ENCODE measurements at regions of chr11 and their contacts with region 1.

Region 1: GRCh38 chr11:10514210-10514609 is 26.8 kb downstream of the RNF141 start:
- DNase-seq: no peak
- ATAC-seq: no peak
- H3K4me3 Mint-ChIP-seq: no peak overlapping the region
- H3K27ac Mint-ChIP-seq: no peak overlapping the region
- H3K4me1 Mint-ChIP-seq: peaks cover 16% of the 10 kb centered on the region
- H3K27me3 Mint-ChIP-seq: no peaks in the 10 kb centered on the region
- CTCF ChIP-seq: no peak

Region 2: DNA sequence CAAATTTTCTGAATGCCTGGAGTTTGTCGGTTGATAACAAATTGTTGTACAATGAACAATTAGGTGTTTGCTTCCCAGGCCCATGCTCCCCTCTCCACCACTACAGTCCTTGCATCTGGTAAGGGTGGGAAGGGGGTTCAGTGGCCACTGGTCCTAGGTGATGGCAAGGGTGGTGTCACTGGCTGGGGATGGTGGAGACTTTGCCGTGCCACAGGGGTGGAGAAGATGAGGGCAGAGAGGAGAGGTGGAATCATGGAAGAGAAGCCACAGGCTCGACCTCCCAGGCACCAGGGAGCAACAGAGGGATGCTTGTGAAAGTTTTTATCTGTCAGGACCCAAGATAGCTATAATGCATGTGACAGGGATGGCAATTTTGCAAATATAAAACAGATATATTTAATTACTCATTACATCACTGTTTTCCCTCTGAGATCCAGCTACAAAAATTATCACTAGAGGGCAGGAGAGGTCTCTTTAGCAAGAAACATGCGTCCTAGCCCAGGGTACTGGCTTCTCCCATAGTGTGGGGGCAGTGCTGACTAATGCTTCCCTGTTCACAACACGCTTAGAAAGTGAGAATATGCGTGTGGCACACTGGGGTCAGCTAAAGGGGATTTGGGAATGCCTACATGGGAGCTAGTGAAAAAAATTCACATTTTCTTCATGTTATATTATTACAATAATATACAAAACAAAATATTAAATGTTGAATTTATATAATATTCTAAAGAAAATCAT is 108.2 kb before region 1 on chr11:
- CTCF ChIA-PET with region 1: interaction called, 12 read pairs
- POLR2A ChIA-PET with region 1: no interaction called
- intact Hi-C with region 1: no loop called
- DNase-seq: no peak
- ATAC-seq: peak; percentile 94
- H3K4me3 Mint-ChIP-seq: no peak overlapping the region
- H3K27ac Mint-ChIP-seq: no peak overlapping the region
- H3K4me1 Mint-ChIP-seq: peaks cover 6% of the 10 kb centered on the region
- H3K27me3 Mint-ChIP-seq: no peaks in the 10 kb centered on the region
- CTCF ChIP-seq: peak; percentile 51